ENCODE measurements at regions of chr10 and their contacts with region 1.

Region 1: DNA sequence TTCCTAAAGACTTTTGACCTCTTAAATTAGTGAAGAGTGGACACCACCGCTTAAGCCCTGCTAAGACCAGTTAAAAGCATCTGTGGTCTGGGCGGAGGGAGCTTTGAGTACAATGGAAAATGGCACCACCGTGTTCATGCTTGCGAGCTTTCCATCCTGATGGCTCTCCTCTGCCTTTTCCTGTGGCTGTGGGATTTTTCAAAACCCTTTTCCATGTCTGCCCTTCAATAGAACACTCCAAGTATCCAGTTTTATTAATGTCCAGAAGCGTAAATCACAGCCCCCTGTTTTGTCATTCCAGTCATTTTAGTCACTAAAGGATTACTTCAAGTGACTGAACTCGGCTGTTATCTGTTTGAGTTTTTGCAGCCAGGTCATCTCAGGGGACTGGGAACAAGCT is 181.8 kb downstream of the MGMT start:
- DNase-seq: no peak
- ATAC-seq: no peak
- H3K4me3 ChIP-seq: no peak overlapping the region
- H3K27ac ChIP-seq: no peak overlapping the region
- H3K4me1 ChIP-seq: no peaks in the 10 kb centered on the region
- H3K27me3 ChIP-seq: no peaks in the 10 kb centered on the region
- CTCF ChIP-seq: no peak

Region 2: GRCh38 chr10:129593953-129594352 is 54.9 kb before region 1 on chr10:
- intact Hi-C with region 1: loop called in 1 of 10 experiments (anchors 2 kb)
- DNase-seq: no peak
- ATAC-seq: no peak
- H3K4me3 ChIP-seq: no peak overlapping the region
- H3K27ac ChIP-seq: no peak overlapping the region
- H3K4me1 ChIP-seq: no peaks in the 10 kb centered on the region
- H3K27me3 ChIP-seq: no peaks in the 10 kb centered on the region
- CTCF ChIP-seq: no peak

Measured in heart right ventricle (tissue), 16 donors.